A549 (cell line): ENCODE measurements at regions of chr12 and their contacts with region 1.

Region 1: DNA sequence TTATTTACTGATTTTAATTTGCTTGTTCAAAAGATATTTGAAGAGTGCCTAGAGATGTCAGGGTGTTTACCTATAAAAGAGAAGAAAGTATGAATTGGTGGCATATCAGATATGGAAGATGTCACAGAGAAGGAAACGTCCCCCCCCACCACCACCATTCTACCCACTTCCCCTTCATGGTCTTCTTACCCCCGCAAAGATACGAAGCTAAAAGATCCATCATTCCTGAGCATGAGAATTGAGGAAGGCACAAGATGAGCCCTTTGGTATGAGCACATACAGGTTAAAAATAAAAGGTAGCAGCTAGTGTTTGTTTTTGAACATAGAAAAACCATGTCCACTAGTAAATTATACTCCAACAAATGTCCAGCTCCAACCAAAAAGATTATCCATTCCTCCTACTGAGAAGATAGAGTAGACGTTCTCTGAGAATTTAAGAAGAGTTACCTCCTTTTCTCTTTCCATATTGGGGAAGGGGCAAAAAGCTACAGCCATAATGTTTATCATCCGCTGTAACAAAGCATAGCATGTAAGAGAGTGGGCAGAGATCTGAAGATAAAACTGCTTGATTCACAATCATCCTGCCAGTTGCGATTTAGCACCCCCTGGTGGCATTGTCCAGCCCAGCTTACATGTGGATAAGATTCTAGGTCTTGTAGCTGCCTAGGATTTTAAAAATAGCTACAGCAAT is 29.1 kb downstream of the NFYB start:
- DNase-seq: peak; percentile 71 to 89
- ATAC-seq: peak; percentile 94 to 97
- H3K4me3 ChIP-seq: no peak overlapping the region
- H3K27ac ChIP-seq: no peak overlapping the region
- H3K4me1 ChIP-seq: peaks cover 9% of the 10 kb centered on the region; the same call in 2 of the 3 replicates
- CTCF ChIP-seq: peak; percentile 95
- EP300 ChIP-seq: no peak
- POLR2A ChIP-seq: no peak
- RAD21 ChIP-seq: peak; percentile 84 to 92

Region 2: GRCh38 chr12:103626498-103626897 is 482.4 kb before region 1 on chr12:
- CTCF ChIA-PET with region 1: interaction called, 13 read pairs
- POLR2A ChIA-PET with region 1: no interaction called
- DNase-seq: peak; percentile 67 to 88
- ATAC-seq: peak; percentile 97
- H3K4me3 ChIP-seq: no peak overlapping the region
- H3K27ac ChIP-seq: peak overlapping the region in 1 of 2 experiments; percentile 44; a peak in 1 of 6 replicates
- H3K4me1 ChIP-seq: 0 out of 3 replicates have a peak, but pooled peaks cover 4% of the 10 kb centered on the region
- CTCF ChIP-seq: peak; percentile 78
- EP300 ChIP-seq: no peak
- POLR2A ChIP-seq: no peak
- RAD21 ChIP-seq: peak; percentile 89 to 91

Region 3: GRCh38 chr12:103884316-103884715 is 224.6 kb before region 1 on chr12:
- CTCF ChIA-PET with region 1: interaction called, 15 read pairs
- POLR2A ChIA-PET with region 1: no interaction called
- DNase-seq: peak in 1 of 2 experiments; percentile 62
- ATAC-seq: peak in 1 of 2 experiments; percentile 51; a peak in 2 of 6 replicates
- H3K4me3 ChIP-seq: no peak overlapping the region
- H3K27ac ChIP-seq: no peak overlapping the region
- H3K4me1 ChIP-seq: peaks cover 15% of the 10 kb centered on the region; the same call in 2 of the 3 replicates
- CTCF ChIP-seq: peak; percentile 58
- EP300 ChIP-seq: no peak
- POLR2A ChIP-seq: no peak
- RAD21 ChIP-seq: peak; percentile 71 to 80

Region 4: GRCh38 chr12:103978384-103978982 is 130.4 kb before region 1 on chr12:
- CTCF ChIA-PET with region 1: interaction called, 13 read pairs
- POLR2A ChIA-PET with region 1: no interaction called
- DNase-seq: no peak
- ATAC-seq: peak; percentile 43 to 45; a peak in 4 of 6 replicates
- H3K4me3 ChIP-seq: no peak overlapping the region
- H3K27ac ChIP-seq: no peak overlapping the region
- H3K4me1 ChIP-seq: no peaks in the 10 kb centered on the region
- CTCF ChIP-seq: no peak
- EP300 ChIP-seq: no peak
- POLR2A ChIP-seq: no peak
- RAD21 ChIP-seq: no peak

Region 5: DNA sequence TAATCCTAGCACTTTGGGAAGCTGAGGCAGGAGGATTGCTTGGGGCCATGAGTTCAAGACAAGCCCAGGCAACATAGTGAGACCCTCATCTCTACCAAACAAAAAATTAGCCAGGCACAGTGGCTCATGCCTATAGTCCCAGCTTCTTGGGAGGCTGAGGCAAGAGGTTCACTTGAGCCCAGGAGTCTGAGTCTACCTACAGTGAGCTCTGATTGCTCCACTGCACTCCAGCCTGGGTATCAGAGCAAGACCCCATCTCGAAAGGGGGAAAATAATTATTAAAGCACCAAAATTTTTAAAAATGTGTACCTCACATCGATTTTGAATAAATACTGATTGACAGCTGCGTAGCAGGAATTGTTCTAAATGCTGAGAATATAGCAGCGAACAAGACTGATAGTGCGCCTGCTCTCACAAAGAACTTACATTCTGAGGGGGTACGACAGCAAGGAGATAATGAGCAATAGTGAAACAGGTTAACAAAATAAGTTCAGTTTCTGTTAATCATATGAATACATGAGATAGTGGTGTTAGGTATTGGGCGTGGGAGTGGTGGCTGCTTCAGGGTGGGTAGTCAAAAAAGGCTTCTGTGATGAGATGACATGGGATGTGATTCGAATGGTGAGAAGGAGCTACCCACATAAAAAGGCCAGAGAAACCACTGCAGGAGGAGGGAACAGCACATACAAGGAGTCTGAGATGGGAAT is 25.0 kb before region 1 on chr12:
- CTCF ChIA-PET with region 1: interaction called, 10 read pairs
- POLR2A ChIA-PET with region 1: no interaction called
- DNase-seq: no peak
- ATAC-seq: no peak
- H3K4me3 ChIP-seq: no peak overlapping the region
- H3K27ac ChIP-seq: no peak overlapping the region
- H3K4me1 ChIP-seq: no peaks in the 10 kb centered on the region
- CTCF ChIP-seq: no peak
- EP300 ChIP-seq: no peak
- POLR2A ChIP-seq: no peak
- RAD21 ChIP-seq: no peak

Region 6: DNA sequence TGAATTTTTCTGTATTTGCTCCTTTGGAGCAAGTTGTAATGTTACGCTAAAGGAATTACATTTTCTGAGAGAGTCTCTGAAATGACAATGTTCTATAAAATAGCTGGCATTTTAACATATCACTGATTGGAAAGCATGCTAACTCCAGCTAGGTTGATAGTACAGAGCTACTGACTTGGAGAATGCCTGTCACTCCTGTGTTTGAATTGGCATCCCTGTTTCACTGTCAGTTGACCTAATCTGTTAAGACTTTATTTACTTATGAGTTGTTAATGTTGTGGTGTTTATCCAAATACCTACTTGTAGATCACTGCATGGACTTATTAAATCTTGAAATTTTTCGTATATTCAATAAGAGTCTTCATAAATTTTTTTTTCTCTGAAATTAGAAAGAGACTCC is 10.9 kb before region 1 on chr12:
- CTCF ChIA-PET with region 1: interaction called, 19 read pairs
- POLR2A ChIA-PET with region 1: no interaction called
- DNase-seq: no peak
- ATAC-seq: no peak
- H3K4me3 ChIP-seq: no peak overlapping the region
- H3K27ac ChIP-seq: no peak overlapping the region
- H3K4me1 ChIP-seq: no peaks in the 10 kb centered on the region
- CTCF ChIP-seq: no peak
- EP300 ChIP-seq: no peak
- POLR2A ChIP-seq: no peak
- RAD21 ChIP-seq: no peak

Region 7: DNA sequence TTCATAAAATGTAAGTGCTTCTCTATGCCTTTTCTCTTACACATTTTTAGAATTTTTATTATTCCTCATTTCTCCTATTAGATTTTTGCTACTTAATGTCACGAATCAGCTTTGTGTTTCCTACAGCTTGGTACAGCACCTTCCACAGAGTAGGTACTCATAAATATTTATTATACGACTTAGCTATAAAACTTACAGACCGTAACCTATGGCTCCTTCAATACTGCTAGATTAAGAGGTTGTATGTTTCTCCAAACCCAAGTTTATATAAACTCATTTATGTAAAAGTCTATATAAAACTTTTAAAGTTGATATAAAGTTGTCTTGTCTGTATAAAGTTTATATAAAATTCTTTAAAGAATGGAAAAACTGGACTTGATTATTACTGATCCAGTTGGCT is 17.6 kb after region 1 on chr12:
- CTCF ChIA-PET with region 1: interaction called, 21 read pairs
- POLR2A ChIA-PET with region 1: no interaction called
- DNase-seq: no peak
- ATAC-seq: no peak
- H3K4me3 ChIP-seq: no peak overlapping the region
- H3K27ac ChIP-seq: no peak overlapping the region
- H3K4me1 ChIP-seq: peaks cover 46% of the 10 kb centered on the region
- CTCF ChIP-seq: no peak
- EP300 ChIP-seq: no peak
- POLR2A ChIP-seq: no peak
- RAD21 ChIP-seq: no peak

Region 8: DNA sequence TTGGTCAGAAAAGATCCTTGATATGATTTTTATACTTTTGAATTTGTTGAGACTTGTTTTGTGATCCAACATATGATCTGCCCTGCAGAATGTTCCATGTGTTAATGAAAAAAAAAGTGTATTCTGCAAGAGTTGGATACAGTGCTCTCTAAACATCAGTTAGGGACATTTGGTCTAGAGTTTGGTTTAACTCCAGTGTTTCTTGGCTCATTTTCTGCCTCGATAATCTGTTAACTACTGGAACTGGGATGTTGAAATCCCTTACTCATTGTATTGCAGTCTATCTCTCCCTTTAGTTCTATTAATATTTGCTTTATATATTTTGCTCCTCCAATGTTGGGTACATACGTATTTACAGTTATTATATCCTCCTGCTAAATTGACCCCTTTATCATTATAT is 88.4 kb after region 1 on chr12:
- CTCF ChIA-PET with region 1: no interaction called
- POLR2A ChIA-PET with region 1: no interaction called
- DNase-seq: no peak
- ATAC-seq: no peak
- H3K4me3 ChIP-seq: no peak overlapping the region
- H3K27ac ChIP-seq: no peak overlapping the region
- H3K4me1 ChIP-seq: peaks cover 5% of the 10 kb centered on the region; the same call in 1 of the 3 replicates
- CTCF ChIP-seq: no peak
- EP300 ChIP-seq: no peak
- POLR2A ChIP-seq: no peak
- RAD21 ChIP-seq: no peak